ENCODE measurements at regions of chr7 and their contacts with region 1.

Region 1: DNA sequence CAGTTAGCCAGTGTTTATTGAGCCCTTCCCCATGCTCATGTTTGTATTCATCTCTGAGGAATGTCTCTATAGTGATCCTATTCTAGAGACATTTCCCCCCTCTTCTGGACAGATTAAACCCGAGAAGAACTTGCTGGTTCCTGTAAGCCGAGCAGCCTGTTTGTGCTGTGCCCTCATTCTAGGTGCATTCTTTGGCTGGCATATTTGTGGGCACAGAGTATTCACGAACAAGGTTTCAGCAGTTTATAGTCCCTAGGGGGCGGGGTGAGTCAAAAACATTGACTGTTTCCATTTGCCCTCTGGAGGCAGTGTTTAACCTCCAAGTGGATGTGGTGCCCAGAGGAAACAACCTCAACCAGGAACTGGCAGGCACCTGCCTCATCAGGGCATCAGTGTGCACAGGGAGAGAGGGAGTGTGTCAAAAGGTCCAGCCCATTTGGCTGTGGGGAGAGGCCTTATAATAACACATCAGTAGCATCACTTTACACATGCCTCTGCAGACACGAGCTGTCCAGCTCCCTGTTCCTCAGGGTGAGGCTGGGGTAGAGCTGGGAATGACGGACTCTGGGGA is 273.3 kb upstream of the LRGUK start:
- DNase-seq: peak; percentile 9
- ATAC-seq: peak; percentile 97
- H3K4me3 ChIP-seq: no peak overlapping the region
- H3K27ac ChIP-seq: no peak overlapping the region
- H3K4me1 ChIP-seq: peaks cover 3% of the 10 kb centered on the region; the same call in 1 of the 2 replicates
- H3K27me3 ChIP-seq: no peaks in the 10 kb centered on the region
- CTCF ChIP-seq: peak; percentile 54 to 68 (median 66)
- EP300 ChIP-seq: no peak
- POLR2A ChIP-seq: no peak
- RAD21 ChIP-seq: peak; percentile 33; the same call in 1 of the 2 replicates

Region 2: DNA sequence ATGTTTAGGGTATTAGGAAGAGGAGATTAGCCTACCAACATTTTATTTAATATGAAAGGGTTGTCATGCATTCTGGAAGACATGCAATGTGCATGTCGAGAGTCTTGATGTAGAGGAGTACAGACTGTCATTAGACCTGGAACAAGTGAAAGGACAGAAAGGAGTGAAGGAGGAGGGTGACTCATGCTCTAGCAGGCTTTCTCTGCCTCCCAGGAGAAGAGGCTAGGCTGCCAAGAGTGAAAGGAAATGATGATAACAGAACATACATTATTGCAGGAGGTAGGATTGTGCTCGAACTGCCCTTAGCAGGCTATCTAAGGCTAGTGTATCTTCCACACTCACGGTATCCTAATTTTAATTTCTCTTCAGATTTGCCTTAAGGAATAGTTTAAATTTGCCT is 372.1 kb before region 1 on chr7:
- CTCF ChIA-PET with region 1: no interaction called
- POLR2A ChIA-PET with region 1: no interaction called
- RAD21 ChIA-PET with region 1: no interaction called
- SMC1A ChIA-PET with region 1: no interaction called
- in situ Hi-C with region 1: no loop called
- intact Hi-C with region 1: loop called (anchors 10 kb)
- DNase-seq: no peak
- ATAC-seq: no peak
- H3K4me3 ChIP-seq: no peak overlapping the region
- H3K27ac ChIP-seq: no peak overlapping the region
- H3K4me1 ChIP-seq: no peaks in the 10 kb centered on the region
- H3K27me3 ChIP-seq: no peaks in the 10 kb centered on the region
- CTCF ChIP-seq: no peak
- EP300 ChIP-seq: no peak
- POLR2A ChIP-seq: no peak
- RAD21 ChIP-seq: no peak

Region 3: GRCh38 chr7:133623721-133624120 is 230.1 kb before region 1 on chr7:
- CTCF ChIA-PET with region 1: no interaction called
- POLR2A ChIA-PET with region 1: no interaction called
- RAD21 ChIA-PET with region 1: no interaction called
- SMC1A ChIA-PET with region 1: no interaction called
- in situ Hi-C with region 1: no loop called
- intact Hi-C with region 1: no loop called
- DNase-seq: no peak
- ATAC-seq: no peak
- H3K4me3 ChIP-seq: no peak overlapping the region
- H3K27ac ChIP-seq: no peak overlapping the region
- H3K4me1 ChIP-seq: no peaks in the 10 kb centered on the region
- H3K27me3 ChIP-seq: no peaks in the 10 kb centered on the region
- CTCF ChIP-seq: no peak
- EP300 ChIP-seq: no peak
- POLR2A ChIP-seq: no peak
- RAD21 ChIP-seq: no peak

Region 4: GRCh38 chr7:133886797-133887196 is 33.0 kb after region 1 on chr7:
- CTCF ChIA-PET with region 1: interaction called, 14 read pairs
- POLR2A ChIA-PET with region 1: no interaction called
- RAD21 ChIA-PET with region 1: no interaction called
- SMC1A ChIA-PET with region 1: no interaction called
- in situ Hi-C with region 1: no loop called
- intact Hi-C with region 1: no loop called
- DNase-seq: no peak
- ATAC-seq: no peak
- H3K4me3 ChIP-seq: no peak overlapping the region
- H3K27ac ChIP-seq: no peak overlapping the region
- H3K4me1 ChIP-seq: no peaks in the 10 kb centered on the region
- H3K27me3 ChIP-seq: no peaks in the 10 kb centered on the region
- CTCF ChIP-seq: no peak
- EP300 ChIP-seq: no peak
- POLR2A ChIP-seq: no peak
- RAD21 ChIP-seq: no peak

Region 5: DNA sequence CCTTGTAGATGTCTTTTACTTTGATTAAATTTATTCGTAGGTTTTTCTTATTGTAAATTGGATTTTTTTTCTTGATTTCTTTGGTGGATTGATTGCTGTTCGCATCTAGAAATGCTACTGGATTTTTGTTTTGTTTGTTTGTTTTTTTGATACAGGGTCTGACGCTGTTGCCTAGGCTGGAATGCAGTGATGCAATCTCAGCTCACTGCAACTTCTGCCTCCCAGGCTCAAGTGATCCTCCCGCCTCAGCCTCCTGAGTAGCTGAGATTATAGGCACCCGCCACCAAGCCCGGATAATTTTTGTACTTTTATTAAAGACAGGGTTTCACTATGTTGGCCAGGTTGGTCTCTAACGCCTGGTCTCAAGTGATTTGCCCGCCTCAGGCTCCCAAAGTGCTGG is 138.4 kb after region 1 on chr7:
- CTCF ChIA-PET with region 1: no interaction called
- POLR2A ChIA-PET with region 1: no interaction called
- RAD21 ChIA-PET with region 1: no interaction called
- SMC1A ChIA-PET with region 1: no interaction called
- in situ Hi-C with region 1: no loop called
- intact Hi-C with region 1: loop called (anchors 5 kb)
- DNase-seq: no peak
- ATAC-seq: no peak
- H3K4me3 ChIP-seq: no peak overlapping the region
- H3K27ac ChIP-seq: no peak overlapping the region
- H3K4me1 ChIP-seq: no peaks in the 10 kb centered on the region
- H3K27me3 ChIP-seq: no peaks in the 10 kb centered on the region
- CTCF ChIP-seq: no peak
- EP300 ChIP-seq: no peak
- POLR2A ChIP-seq: no peak
- RAD21 ChIP-seq: no peak

Measured in GM12878 (cell line).